ENCODE measurements at regions of chr7 and their contacts with region 1.

Region 1: GRCh38 chr7:91880413-91881241 is at the start of gene MTERF1:
- DNase-seq: peak; percentile 88 to 95 (median 91)
- H3K4me3 ChIP-seq: peak within 1 kb of the TSS; percentile 24 to 76 (median 52)
- H3K27ac ChIP-seq: peak within 1 kb of the TSS in 3 of 5 donors; percentile 13 to 28 (median 16)
- H3K4me1 ChIP-seq: peaks cover 6 to 10% of the 10 kb centered on the region in 2 donors
- H3K27me3 ChIP-seq: no peaks in the 10 kb centered on the region
- CTCF ChIP-seq: peak; percentile 90 to 97 (median 91)
- POLR2A ChIP-seq: no peak
- total RNA-seq, gene MTERF1: 4.0 to 19.1 (median 9.7) TPM

Region 2: GRCh38 chr7:91692800-91693199 is 187.8 kb before region 1 on chr7:
- intact Hi-C with region 1: no loop called
- DNase-seq: no peak
- H3K4me3 ChIP-seq: no peak overlapping the region
- H3K27ac ChIP-seq: no peak overlapping the region
- H3K4me1 ChIP-seq: no peaks in the 10 kb centered on the region
- H3K27me3 ChIP-seq: no peaks in the 10 kb centered on the region
- CTCF ChIP-seq: no peak
- POLR2A ChIP-seq: no peak

Region 3: GRCh38 chr7:92025260-92025659 is 144.6 kb after region 1 on chr7:
- intact Hi-C with region 1: no loop called
- DNase-seq: no peak
- H3K4me3 ChIP-seq: no peak overlapping the region
- H3K27ac ChIP-seq: no peak overlapping the region
- H3K4me1 ChIP-seq: no peaks in the 10 kb centered on the region
- H3K27me3 ChIP-seq: no peaks in the 10 kb centered on the region
- CTCF ChIP-seq: no peak
- POLR2A ChIP-seq: no peak

Region 4: GRCh38 chr7:92134271-92135051 is 253.8 kb after region 1 on chr7 and contains the start of gene CYP51A1:
- intact Hi-C with region 1: loop called in 1 of 2 experiments (anchors 10 kb)
- DNase-seq: peak; percentile 91 to 98 (median 95)
- H3K4me3 ChIP-seq: peak within 1 kb of the TSS; percentile 51 to 82 (median 58)
- H3K27ac ChIP-seq: peak within 1 kb of the TSS; percentile 92 to 99 (median 97)
- H3K4me1 ChIP-seq: peaks cover 5 to 28% of the 10 kb centered on the region in 2 donors
- H3K27me3 ChIP-seq: no peaks in the 10 kb centered on the region
- CTCF ChIP-seq: peak in 4 of 6 experiments; percentile 5 to 26 (median 14)
- POLR2A ChIP-seq: peak; percentile 79 to 83
- total RNA-seq, gene CYP51A1: 49.4 to 1,068 (median 111) TPM